ENCODE measurements at regions of chr14 and their contacts with region 1.

Region 1: DNA sequence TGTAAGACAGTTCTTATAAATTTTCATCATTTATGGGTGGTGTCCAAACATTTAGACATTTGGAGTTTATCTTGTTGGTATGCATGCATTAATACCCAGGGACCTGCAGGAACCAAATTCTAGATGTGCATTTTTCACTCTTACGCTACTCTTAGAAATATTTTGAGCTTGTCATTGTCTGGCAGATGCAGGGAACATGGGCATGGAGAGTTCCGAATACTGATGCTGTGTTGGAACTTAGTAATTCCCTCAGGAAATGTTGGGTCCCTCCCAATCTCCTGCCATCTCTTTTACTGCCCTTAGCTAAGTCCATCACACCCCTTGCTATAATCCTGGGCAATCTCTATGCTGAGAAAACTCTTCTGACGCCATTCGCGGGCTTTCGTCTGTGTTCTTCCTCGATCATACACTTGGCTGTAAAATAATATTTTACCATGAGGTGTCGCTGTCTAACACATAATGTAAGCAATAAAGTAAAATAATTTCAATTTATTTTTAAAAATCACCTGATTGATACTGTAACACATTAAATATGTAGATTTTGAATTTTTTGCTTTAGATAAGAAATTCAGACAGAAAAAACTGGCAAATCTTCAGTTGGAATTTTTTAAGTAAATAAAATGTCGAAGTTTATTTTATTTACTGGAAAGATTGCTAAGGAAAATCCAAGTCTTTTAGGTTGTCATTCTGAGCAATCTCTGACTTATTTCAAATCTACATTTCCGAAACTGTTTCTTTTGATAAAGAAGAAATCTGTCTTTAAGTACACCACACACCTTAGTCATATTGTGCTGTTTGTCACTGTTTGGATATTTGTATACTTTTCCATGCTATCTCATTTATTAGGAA is 304.1 kb upstream of the SSTR1 start:
- DNase-seq: peak; percentile 28
- ATAC-seq: peak; percentile 82
- H3K4me3 ChIP-seq: no peak overlapping the region
- H3K27ac ChIP-seq: no peak overlapping the region
- H3K4me1 ChIP-seq: 0 out of 4 replicates have a peak, but pooled peaks cover 0 to 4% of the 10 kb centered on the region in 2 experiments
- H3K27me3 ChIP-seq: peaks cover 8% of the 10 kb centered on the region; the same call in 1 of the 2 replicates
- CTCF ChIP-seq: peak; percentile 32 to 66 (median 36); a peak in 4 of 6 replicates
- POLR2A ChIP-seq: no peak
- RAD21 ChIP-seq: peak; percentile 64

Region 2: DNA sequence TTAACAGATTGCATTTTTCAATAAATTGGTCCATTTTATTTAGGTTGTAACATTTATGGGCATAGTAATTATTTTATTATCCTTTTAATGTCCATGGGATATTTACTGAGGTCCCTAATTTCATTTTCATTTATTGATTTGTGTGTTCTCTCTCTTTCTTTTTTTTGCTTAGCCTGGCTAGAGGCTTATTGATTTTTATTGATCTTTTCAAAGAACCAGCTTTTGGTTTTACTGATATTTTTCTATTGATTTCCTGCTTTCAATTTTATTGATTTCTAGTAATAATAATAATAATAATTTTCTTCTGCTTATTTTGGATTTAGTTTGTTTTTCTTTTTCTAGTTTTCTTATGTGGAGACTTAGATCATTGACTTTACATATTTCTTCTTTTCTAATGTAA is 18.0 kb before region 1 on chr14:
- CTCF ChIA-PET with region 1: no interaction called
- POLR2A ChIA-PET with region 1: no interaction called
- RAD21 ChIA-PET with region 1: no interaction called
- intact Hi-C with region 1: no loop called
- DNase-seq: no peak
- ATAC-seq: no peak
- H3K4me3 ChIP-seq: no peak overlapping the region
- H3K27ac ChIP-seq: no peak overlapping the region
- H3K4me1 ChIP-seq: no peaks in the 10 kb centered on the region
- H3K27me3 ChIP-seq: no peaks in the 10 kb centered on the region
- CTCF ChIP-seq: no peak
- POLR2A ChIP-seq: no peak
- RAD21 ChIP-seq: no peak

Region 3: DNA sequence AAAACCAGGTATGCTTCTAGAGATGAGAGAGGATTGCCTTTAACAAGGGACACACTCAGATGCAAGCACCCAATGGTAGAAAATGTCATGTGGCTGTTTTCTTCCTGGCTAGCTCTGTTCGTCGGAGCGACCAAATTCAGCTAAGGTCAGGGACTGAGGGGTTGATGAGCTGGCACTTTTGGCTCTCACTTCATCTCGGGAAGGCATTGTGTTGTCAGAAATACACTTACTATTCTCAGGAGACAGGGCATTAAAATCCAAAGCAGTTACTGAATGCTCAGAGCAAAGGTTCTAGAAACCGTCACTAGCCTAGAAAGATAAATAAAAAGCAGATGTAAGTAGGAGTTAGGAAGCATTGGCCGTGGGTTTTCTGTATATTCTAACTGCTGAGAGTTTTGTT is 28.4 kb after region 1 on chr14:
- CTCF ChIA-PET with region 1: no interaction called
- POLR2A ChIA-PET with region 1: no interaction called
- RAD21 ChIA-PET with region 1: no interaction called
- intact Hi-C with region 1: no loop called
- DNase-seq: no peak
- ATAC-seq: no peak
- H3K4me3 ChIP-seq: no peak overlapping the region
- H3K27ac ChIP-seq: no peak overlapping the region
- H3K4me1 ChIP-seq: no peaks in the 10 kb centered on the region
- H3K27me3 ChIP-seq: peaks cover 6% of the 10 kb centered on the region; the same call in 1 of the 2 replicates
- CTCF ChIP-seq: no peak
- POLR2A ChIP-seq: no peak
- RAD21 ChIP-seq: no peak

Region 4: DNA sequence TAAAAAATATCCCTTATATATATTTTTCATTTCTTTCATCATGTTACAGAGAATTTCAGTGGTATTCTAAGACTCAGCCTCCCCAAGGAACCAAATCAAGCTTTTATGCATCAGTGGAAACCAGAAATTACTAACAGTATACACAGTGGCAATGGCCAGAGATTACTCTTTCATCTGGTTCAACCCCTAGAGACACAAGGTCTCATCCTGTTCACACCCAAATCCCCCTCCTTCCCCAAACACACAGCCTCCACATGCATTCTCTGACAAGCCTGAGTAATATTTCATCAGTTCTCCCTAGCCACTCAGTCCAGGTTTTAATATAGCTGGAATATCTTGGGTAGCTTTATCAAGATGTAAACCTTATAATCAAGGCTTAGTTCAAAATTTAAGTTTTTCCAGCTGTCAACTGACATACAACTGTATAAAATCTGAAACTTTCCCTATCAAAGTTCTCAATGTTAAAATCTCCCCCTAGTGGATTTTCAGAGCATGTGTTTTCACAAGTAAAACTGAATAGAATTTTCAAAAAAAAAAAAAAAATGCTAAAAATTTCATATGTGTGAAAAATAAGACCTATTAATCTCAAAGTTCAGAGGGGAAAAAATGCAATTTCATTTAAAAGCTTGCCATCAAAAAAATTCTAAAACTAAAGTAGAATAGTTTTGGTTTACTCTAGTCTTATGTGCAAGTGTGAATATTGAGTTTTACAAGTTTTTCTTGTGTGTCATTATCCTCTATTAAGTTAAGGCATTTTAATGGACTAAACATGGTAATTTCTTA is 293.6 kb after region 1 on chr14:
- CTCF ChIA-PET with region 1: interaction called, 4 read pairs
- POLR2A ChIA-PET with region 1: no interaction called
- RAD21 ChIA-PET with region 1: no interaction called
- intact Hi-C with region 1: loop called (anchors 5 kb)
- DNase-seq: no peak
- ATAC-seq: no peak
- H3K4me3 ChIP-seq: no peak overlapping the region
- H3K27ac ChIP-seq: no peak overlapping the region
- H3K4me1 ChIP-seq: no peaks in the 10 kb centered on the region
- H3K27me3 ChIP-seq: no peaks in the 10 kb centered on the region
- CTCF ChIP-seq: peak; percentile 12 to 55 (median 25); a peak in 4 of 6 replicates
- POLR2A ChIP-seq: no peak
- RAD21 ChIP-seq: 0 out of 2 replicates have a peak, but pooled peaks have one; percentile 17

Region 5: GRCh38 chr14:38605193-38606114 is 701.9 kb after region 1 on chr14:
- CTCF ChIA-PET with region 1: interaction called, 4 read pairs
- POLR2A ChIA-PET with region 1: no interaction called
- RAD21 ChIA-PET with region 1: no interaction called
- intact Hi-C with region 1: loop called (anchors 10 kb)
- DNase-seq: no peak
- ATAC-seq: no peak
- H3K4me3 ChIP-seq: no peak overlapping the region
- H3K27ac ChIP-seq: no peak overlapping the region
- H3K4me1 ChIP-seq: no peaks in the 10 kb centered on the region
- H3K27me3 ChIP-seq: no peaks in the 10 kb centered on the region
- CTCF ChIP-seq: peak in 2 of 3 experiments; percentile 17 to 46; a peak in 3 of 6 replicates
- POLR2A ChIP-seq: no peak
- RAD21 ChIP-seq: peak; percentile 24; the same call in 1 of the 2 replicates

Region 6: DNA sequence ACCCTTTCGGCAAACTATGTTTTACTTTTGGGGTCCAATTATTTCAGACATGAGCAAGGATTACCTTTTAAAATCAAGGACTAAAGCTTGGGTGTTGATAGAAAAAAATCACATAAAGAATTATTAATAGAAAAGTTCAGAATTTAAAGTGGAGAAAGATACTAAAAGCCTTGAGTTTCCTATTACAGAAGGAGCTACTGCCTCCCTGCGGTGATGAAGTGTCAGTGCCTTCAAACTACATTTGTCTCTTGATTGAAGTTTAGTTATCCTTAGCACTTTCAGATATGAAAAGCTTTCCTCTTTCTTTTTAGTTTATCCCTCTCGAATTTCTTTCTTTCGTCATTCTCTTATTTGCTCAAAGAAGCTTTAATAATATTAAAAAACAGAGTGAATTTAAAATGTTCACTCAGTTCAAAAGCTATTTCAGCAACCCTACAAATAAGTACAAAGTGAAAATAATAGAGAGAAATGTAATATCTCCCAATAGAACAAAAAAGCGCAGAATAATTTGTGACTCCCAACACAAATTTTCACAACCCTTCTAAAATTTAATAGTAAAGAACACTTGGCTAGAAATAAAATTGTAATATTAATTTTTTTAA is 1111.9 kb after region 1 on chr14:
- CTCF ChIA-PET with region 1: interaction called, 4 read pairs
- POLR2A ChIA-PET with region 1: no interaction called
- RAD21 ChIA-PET with region 1: no interaction called
- intact Hi-C with region 1: loop called (anchors 10 kb)
- DNase-seq: peak; percentile 28
- ATAC-seq: peak; percentile 62
- H3K4me3 ChIP-seq: no peak overlapping the region
- H3K27ac ChIP-seq: no peak overlapping the region
- H3K4me1 ChIP-seq: no peaks in the 10 kb centered on the region
- H3K27me3 ChIP-seq: no peaks in the 10 kb centered on the region
- CTCF ChIP-seq: peak; percentile 39 to 85 (median 83); a peak in 5 of 6 replicates
- POLR2A ChIP-seq: no peak
- RAD21 ChIP-seq: peak; percentile 58